ENCODE measurements at regions of chr13 and their contacts with region 1.

Region 1: GRCh38 chr13:68304286-68304893 is 1074.3 kb upstream of the PCDH9 start:
- DNase-seq: no peak
- ATAC-seq: no peak
- H3K4me3 ChIP-seq: no peak overlapping the region
- H3K27ac ChIP-seq: no peak overlapping the region
- H3K4me1 ChIP-seq: no peaks in the 10 kb centered on the region
- H3K27me3 ChIP-seq: no peaks in the 10 kb centered on the region
- CTCF ChIP-seq: peak; percentile 27 to 57 (median 39)
- POLR2A ChIP-seq: no peak

Region 2: DNA sequence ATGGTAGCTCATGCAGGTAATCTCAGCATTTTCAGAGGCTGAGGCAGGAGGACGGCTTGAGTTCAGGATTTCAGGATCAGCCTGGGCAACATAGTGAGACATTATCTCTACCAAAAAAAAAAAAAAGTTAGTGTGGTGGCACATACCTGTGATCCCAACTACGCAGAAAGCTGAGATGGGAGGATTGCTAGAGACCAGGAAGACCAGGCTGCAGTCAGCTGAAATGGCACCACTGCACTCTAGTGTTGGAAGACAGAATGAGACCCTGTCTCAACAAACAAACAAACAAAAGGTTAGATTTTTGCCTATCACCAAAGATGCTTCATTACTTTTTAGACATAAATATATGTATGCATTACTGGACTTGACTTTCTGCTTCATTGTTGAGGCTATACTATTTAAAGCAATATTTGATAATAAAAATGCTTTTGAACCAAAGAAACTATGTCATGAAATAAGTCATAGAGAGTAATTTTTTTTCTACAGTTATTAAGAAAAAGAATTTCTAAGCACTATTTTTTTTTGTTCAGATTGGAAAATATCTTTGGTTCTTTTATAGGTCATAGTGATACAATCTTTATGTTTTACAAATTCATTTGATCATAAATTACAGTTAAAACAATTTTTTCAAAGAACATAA is 623.1 kb after region 1 on chr13:
- intact Hi-C with region 1: loop called in 5 of 10 experiments (anchors 2 to 10 kb)
- DNase-seq: no peak
- ATAC-seq: no peak
- H3K4me3 ChIP-seq: no peak overlapping the region
- H3K27ac ChIP-seq: no peak overlapping the region
- H3K4me1 ChIP-seq: no peaks in the 10 kb centered on the region
- H3K27me3 ChIP-seq: no peaks in the 10 kb centered on the region
- CTCF ChIP-seq: peak in 9 of 12 donors; percentile 11 to 37 (median 26)
- POLR2A ChIP-seq: no peak

Measured in heart left ventricle (tissue), 16 donors.